ENCODE measurements at regions of chrX and their contacts with region 1.

Region 1: DNA sequence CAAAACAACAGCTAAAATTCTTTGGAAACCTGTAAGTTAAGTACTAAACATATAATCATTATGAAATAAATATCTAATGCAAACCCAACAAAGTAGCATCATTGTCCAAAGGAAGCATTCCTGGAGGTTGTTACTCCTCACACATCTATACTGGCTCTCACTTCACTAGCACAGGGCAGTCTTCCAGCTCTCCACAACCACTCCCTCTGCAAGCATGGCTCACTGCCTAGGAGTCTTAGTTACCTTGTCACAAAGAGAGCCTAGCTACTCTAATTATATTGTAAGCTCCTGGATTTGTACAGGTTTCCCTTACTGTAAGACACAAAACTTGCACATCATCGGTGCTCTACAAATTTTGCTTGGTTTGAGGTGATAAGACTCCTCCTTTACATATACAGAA is 76.1 kb downstream of the AMMECR1 start:
- DNase-seq: peak; percentile 57
- ATAC-seq: peak; percentile 90
- H3K4me3 ChIP-seq: no peak overlapping the region
- H3K27ac ChIP-seq: peak overlapping the region; percentile 25; the same call in 1 of the 2 replicates
- H3K4me1 ChIP-seq: peaks cover 24% of the 10 kb centered on the region
- H3K27me3 ChIP-seq: no peaks in the 10 kb centered on the region
- CTCF ChIP-seq: no peak

Region 2: GRCh38 chrX:110284159-110284558 is 42.3 kb after region 1 on chrX:
- CTCF ChIA-PET with region 1: no interaction called
- POLR2A ChIA-PET with region 1: no interaction called
- intact Hi-C with region 1: loop called (anchors 1 kb)
- DNase-seq: peak; percentile 83
- ATAC-seq: peak; percentile 68
- H3K4me3 ChIP-seq: no peak overlapping the region
- H3K27ac ChIP-seq: peak overlapping the region; percentile 92
- H3K4me1 ChIP-seq: peaks cover 59% of the 10 kb centered on the region
- H3K27me3 ChIP-seq: no peaks in the 10 kb centered on the region
- CTCF ChIP-seq: no peak

Measured in PC-3 (cell line).